CD8-positive, alpha-beta T cell (primary cell): ENCODE measurements at regions of chr10 and their contacts with region 1.

Region 1: GRCh38 chr10:119445311-119445934 is 97.1 kb downstream of the RGS10 start:
- DNase-seq: peak; percentile 67 to 93 (median 85)
- ATAC-seq: peak; percentile 80
- H3K4me3 ChIP-seq: no peak overlapping the region
- H3K4me3 Mint-ChIP-seq: no peak overlapping the region
- H3K27ac ChIP-seq: no peak overlapping the region
- H3K27ac Mint-ChIP-seq: peak overlapping the region; percentile 66
- H3K4me1 ChIP-seq: peaks cover 10% of the 10 kb centered on the region
- H3K4me1 Mint-ChIP-seq: peaks cover 11% of the 10 kb centered on the region
- H3K27me3 ChIP-seq: no peaks in the 10 kb centered on the region
- H3K27me3 Mint-ChIP-seq: no peaks in the 10 kb centered on the region
- CTCF ChIP-seq: peak; percentile 81

Region 2: DNA sequence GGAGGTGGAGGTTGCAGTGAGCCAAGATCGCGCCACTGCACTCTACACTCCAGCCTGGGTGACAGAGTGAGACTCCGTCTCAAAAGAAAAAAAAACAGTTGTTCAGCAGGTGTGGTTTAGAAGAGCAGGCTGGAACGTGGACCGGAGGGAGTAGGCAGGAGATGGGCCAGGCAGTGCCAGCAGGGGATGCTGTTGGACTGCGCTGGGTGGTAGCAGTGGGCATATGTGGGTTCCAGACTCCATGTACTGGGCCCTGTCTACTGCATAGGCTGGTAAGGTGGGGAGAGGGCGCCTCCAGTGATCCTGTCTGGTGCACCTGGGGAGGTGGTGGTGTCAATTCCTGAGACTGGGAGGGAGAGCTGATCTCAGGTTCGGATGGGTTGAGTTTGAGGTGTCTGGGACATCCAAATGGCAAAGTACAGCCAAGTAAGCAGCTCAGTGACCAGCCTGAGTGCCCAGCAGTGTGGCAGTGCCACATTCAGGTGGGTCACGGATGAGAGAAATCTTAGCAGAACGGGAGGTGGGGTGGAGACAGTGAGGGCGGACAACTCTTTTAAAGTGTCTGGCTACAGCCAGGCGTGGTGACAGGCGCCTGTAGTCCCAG is 305.9 kb before region 1 on chr10:
- CTCF ChIA-PET with region 1: interaction called, 4 read pairs
- POLR2A ChIA-PET with region 1: no interaction called
- intact Hi-C with region 1: loop called in 1 of 2 experiments (anchors 1 kb)
- DNase-seq: peak; percentile 14 to 71 (median 53)
- ATAC-seq: peak; percentile 88
- H3K4me3 ChIP-seq: no peak overlapping the region
- H3K4me3 Mint-ChIP-seq: no peak overlapping the region
- H3K27ac ChIP-seq: no peak overlapping the region
- H3K27ac Mint-ChIP-seq: peak overlapping the region; percentile 34
- H3K4me1 ChIP-seq: no peaks in the 10 kb centered on the region
- H3K4me1 Mint-ChIP-seq: peaks cover 6% of the 10 kb centered on the region
- H3K27me3 ChIP-seq: no peaks in the 10 kb centered on the region
- H3K27me3 Mint-ChIP-seq: no peaks in the 10 kb centered on the region
- CTCF ChIP-seq: peak; percentile 38

Region 3: GRCh38 chr10:119416855-119417254 is 28.6 kb before region 1 on chr10:
- CTCF ChIA-PET with region 1: interaction called, 18 read pairs
- POLR2A ChIA-PET with region 1: no interaction called
- intact Hi-C with region 1: no loop called
- DNase-seq: peak; percentile 45 to 83 (median 73)
- ATAC-seq: peak; percentile 86
- H3K4me3 ChIP-seq: no peak overlapping the region
- H3K4me3 Mint-ChIP-seq: no peak overlapping the region
- H3K27ac ChIP-seq: no peak overlapping the region
- H3K27ac Mint-ChIP-seq: no peak overlapping the region
- H3K4me1 ChIP-seq: no peaks in the 10 kb centered on the region
- H3K4me1 Mint-ChIP-seq: peaks cover 2% of the 10 kb centered on the region
- H3K27me3 ChIP-seq: no peaks in the 10 kb centered on the region
- H3K27me3 Mint-ChIP-seq: no peaks in the 10 kb centered on the region
- CTCF ChIP-seq: peak; percentile 60

Region 4: DNA sequence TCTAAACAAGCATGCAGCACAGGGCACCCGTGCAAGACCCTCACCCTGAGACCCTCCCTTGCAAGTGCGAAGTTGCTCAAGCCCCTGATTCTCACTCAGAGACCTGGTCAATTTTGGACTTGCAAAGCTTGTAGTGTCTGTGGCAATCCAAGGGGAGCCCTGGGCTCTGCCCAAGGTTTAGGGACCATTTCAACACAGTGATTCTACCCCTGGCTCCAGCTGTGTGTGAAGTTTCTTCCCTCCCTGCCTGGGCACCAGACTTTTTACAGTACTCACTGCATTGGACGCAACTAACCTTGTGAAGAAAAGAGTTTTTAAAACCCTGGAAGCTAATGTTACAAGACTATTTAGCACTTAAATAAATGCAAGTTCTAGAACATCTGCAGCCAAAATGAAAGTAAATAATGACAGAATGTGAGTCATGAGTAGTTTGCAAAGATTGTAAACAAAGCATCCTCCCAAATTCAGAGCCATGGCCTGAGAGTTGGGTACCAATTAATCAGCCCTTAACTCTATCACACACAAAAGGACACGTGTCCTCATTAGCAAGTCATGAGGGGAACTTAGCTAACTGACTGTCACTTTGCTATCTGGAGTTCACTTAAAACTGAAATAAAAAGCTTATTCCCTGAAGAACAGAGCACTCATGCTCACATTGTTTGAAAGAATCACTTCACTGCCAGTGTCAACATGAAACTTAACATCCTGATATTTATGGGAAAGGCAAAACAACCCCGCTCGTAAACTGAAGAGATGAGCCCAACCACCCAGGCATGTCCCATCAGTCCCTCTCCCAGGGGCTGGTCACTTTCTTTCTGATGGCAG is 49.0 kb after region 1 on chr10:
- CTCF ChIA-PET with region 1: interaction called, 38 read pairs
- POLR2A ChIA-PET with region 1: interaction called, 8 read pairs
- intact Hi-C with region 1: loop called (anchors 1 kb)
- DNase-seq: no peak
- ATAC-seq: peak; percentile 16
- H3K4me3 ChIP-seq: no peak overlapping the region
- H3K4me3 Mint-ChIP-seq: peak overlapping the region; percentile 44
- H3K27ac ChIP-seq: peak overlapping the region in 1 of 2 experiments; percentile 40
- H3K27ac Mint-ChIP-seq: peak overlapping the region; percentile 93
- H3K4me1 ChIP-seq: peaks cover 87% of the 10 kb centered on the region
- H3K4me1 Mint-ChIP-seq: peaks cover 74% of the 10 kb centered on the region
- H3K27me3 ChIP-seq: no peaks in the 10 kb centered on the region
- H3K27me3 Mint-ChIP-seq: no peaks in the 10 kb centered on the region
- CTCF ChIP-seq: no peak

Region 5: GRCh38 chr10:119526621-119527592 is 81.5 kb after region 1 on chr10:
- CTCF ChIA-PET with region 1: interaction called, 13 read pairs
- POLR2A ChIA-PET with region 1: no interaction called
- intact Hi-C with region 1: no loop called
- DNase-seq: peak in 3 of 9 experiments; percentile 34 to 76 (median 50)
- ATAC-seq: peak; percentile 87
- H3K4me3 ChIP-seq: no peak overlapping the region
- H3K4me3 Mint-ChIP-seq: no peak overlapping the region
- H3K27ac ChIP-seq: peak overlapping the region in 1 of 2 experiments; percentile 12
- H3K27ac Mint-ChIP-seq: peak overlapping the region; percentile 89
- H3K4me1 ChIP-seq: peaks cover 62% of the 10 kb centered on the region
- H3K4me1 Mint-ChIP-seq: peaks cover 72% of the 10 kb centered on the region
- H3K27me3 ChIP-seq: no peaks in the 10 kb centered on the region
- H3K27me3 Mint-ChIP-seq: no peaks in the 10 kb centered on the region
- CTCF ChIP-seq: no peak

Region 6: DNA sequence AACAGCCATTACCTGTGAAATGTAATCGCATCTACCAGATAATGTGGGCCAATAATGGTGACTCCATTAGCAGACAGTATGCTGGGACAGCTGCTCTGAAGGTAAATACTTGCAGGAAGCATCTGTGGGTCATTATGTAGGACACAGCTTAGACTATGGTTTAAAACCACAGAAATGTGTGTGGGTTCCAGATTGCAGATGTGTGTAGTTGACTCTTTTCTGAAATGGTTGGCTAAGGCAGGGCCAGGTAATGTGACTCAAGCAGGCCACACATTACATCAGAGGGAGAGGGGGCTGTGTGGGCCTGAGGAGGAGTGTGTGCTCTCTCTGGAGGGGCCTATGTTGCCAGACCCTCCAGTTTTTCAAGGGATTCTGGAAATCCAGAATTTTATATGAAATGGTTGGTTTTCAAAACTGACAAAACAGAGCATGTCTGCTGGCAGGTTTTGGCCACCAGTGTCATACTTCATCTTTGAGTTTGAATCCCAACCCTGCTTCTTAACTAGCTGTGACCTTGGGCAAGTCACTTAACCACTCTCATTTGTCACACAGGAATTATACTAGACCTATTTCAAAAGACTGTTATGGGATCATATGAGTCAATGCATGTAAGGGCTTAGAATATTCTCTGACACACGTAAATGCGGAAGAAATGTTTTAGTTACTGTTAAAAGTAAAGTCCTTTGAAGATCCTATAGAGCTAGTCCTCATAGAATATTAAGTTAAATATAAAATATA is 362.7 kb after region 1 on chr10:
- CTCF ChIA-PET with region 1: no interaction called
- POLR2A ChIA-PET with region 1: no interaction called
- intact Hi-C with region 1: no loop called
- DNase-seq: peak in 1 of 9 experiments; percentile 8
- ATAC-seq: peak; percentile 31
- H3K4me3 ChIP-seq: no peak overlapping the region
- H3K4me3 Mint-ChIP-seq: no peak overlapping the region
- H3K27ac ChIP-seq: no peak overlapping the region
- H3K27ac Mint-ChIP-seq: no peak overlapping the region
- H3K4me1 ChIP-seq: no peaks in the 10 kb centered on the region
- H3K4me1 Mint-ChIP-seq: peaks cover 3% of the 10 kb centered on the region
- H3K27me3 ChIP-seq: no peaks in the 10 kb centered on the region
- H3K27me3 Mint-ChIP-seq: no peaks in the 10 kb centered on the region
- CTCF ChIP-seq: no peak

Region 7: GRCh38 chr10:121448766-121449421 is 2003.5 kb after region 1 on chr10:
- CTCF ChIA-PET with region 1: no interaction called
- POLR2A ChIA-PET with region 1: no interaction called
- intact Hi-C with region 1: no loop called
- DNase-seq: no peak
- ATAC-seq: no peak
- H3K4me3 ChIP-seq: no peak overlapping the region
- H3K4me3 Mint-ChIP-seq: no peak overlapping the region
- H3K27ac ChIP-seq: no peak overlapping the region
- H3K27ac Mint-ChIP-seq: no peak overlapping the region
- H3K4me1 ChIP-seq: no peaks in the 10 kb centered on the region
- H3K4me1 Mint-ChIP-seq: no peaks in the 10 kb centered on the region
- H3K27me3 ChIP-seq: no peaks in the 10 kb centered on the region
- H3K27me3 Mint-ChIP-seq: no peaks in the 10 kb centered on the region
- CTCF ChIP-seq: no peak